ENCODE measurements at regions of chr19 and their contacts with region 1.

Region 1: GRCh38 chr19:40603389-40604135 is 2.4 kb downstream of the LTBP4 start:
- DNase-seq: peak; percentile 99
- ATAC-seq: peak; percentile 79
- H3K4me3 Mint-ChIP-seq: peak overlapping the region; percentile 73
- H3K27ac Mint-ChIP-seq: peak overlapping the region; percentile 82
- H3K4me1 Mint-ChIP-seq: peaks cover 61% of the 10 kb centered on the region
- H3K27me3 Mint-ChIP-seq: peaks cover 31% of the 10 kb centered on the region

Region 2: DNA sequence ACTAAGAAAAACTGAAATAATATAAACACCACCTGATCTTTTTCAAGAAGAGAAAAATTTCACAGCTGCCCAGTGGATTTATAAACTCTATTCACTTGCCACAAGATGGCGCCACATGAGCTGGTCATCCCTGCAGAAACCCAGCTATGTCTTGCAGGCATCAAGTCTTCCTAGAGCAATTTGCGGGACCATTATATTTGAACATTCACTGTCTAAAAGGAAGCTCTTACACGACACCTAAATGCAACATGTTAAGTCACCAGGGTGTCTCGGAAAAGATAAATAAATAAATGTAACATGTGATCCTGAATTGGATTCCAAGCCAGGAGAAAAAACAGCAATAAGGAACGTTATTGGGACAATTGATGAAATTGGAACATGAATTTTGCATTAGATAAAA is 298.2 kb before region 1 on chr19:
- CTCF ChIA-PET with region 1: interaction called, 38 read pairs
- DNase-seq: peak; percentile 87
- ATAC-seq: peak; percentile 76
- H3K4me3 Mint-ChIP-seq: no peak overlapping the region
- H3K27ac Mint-ChIP-seq: no peak overlapping the region
- H3K4me1 Mint-ChIP-seq: peaks cover 4% of the 10 kb centered on the region
- H3K27me3 Mint-ChIP-seq: no peaks in the 10 kb centered on the region

Region 3: GRCh38 chr19:40370997-40371801 is 232.4 kb before region 1 on chr19:
- CTCF ChIA-PET with region 1: no interaction called
- DNase-seq: no peak
- ATAC-seq: no peak
- H3K4me3 Mint-ChIP-seq: no peak overlapping the region
- H3K27ac Mint-ChIP-seq: no peak overlapping the region
- H3K4me1 Mint-ChIP-seq: peaks cover 12% of the 10 kb centered on the region
- H3K27me3 Mint-ChIP-seq: no peaks in the 10 kb centered on the region

Region 4: GRCh38 chr19:40403262-40403984 is 200.1 kb before region 1 on chr19:
- CTCF ChIA-PET with region 1: no interaction called
- DNase-seq: peak; percentile 93
- ATAC-seq: peak; percentile 81
- H3K4me3 Mint-ChIP-seq: peak overlapping the region; percentile 83
- H3K27ac Mint-ChIP-seq: peak overlapping the region; percentile 69
- H3K4me1 Mint-ChIP-seq: peaks cover 16% of the 10 kb centered on the region
- H3K27me3 Mint-ChIP-seq: peaks cover 4% of the 10 kb centered on the region

Region 5: DNA sequence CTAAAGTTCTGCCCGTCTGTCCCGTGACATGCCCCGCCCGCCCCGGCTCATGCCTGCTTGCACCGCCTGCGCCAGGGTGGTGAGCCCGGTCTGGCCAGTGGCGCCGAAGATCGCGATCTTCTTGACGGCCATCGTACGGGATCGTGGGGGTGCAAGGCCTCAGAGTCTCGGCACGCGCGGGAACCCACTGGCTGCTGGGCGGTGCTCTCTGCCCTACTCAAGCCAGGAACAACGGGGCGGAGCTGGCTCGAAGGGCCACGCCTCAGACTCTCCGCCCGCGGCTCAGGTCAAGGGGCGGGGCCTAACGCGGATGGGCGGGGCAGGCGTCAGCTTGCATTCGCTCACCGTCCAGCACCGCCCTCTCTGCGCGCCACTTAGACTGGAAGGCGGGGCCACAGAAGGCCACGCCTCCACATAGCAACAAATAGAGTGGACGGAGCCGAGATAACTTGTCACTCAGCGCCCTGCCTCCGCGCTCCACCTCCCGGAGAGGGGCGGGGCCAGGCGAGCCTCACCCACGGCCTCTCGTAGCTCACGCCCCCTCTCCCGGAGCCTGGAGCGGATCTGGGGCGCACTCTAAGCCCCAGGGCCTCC is 137.9 kb before region 1 on chr19 and contains the start of gene BLVRB:
- CTCF ChIA-PET with region 1: interaction called, 35 read pairs
- DNase-seq: peak; percentile 99
- ATAC-seq: peak; percentile 88
- H3K4me3 Mint-ChIP-seq: peak within 1 kb of the TSS; percentile 79
- H3K27ac Mint-ChIP-seq: peak within 1 kb of the TSS; percentile 85
- H3K4me1 Mint-ChIP-seq: peaks cover 34% of the 10 kb centered on the region
- H3K27me3 Mint-ChIP-seq: peaks cover 23% of the 10 kb centered on the region
- total RNA-seq, gene BLVRB: 12.9 to 23.3 TPM

Region 6: DNA sequence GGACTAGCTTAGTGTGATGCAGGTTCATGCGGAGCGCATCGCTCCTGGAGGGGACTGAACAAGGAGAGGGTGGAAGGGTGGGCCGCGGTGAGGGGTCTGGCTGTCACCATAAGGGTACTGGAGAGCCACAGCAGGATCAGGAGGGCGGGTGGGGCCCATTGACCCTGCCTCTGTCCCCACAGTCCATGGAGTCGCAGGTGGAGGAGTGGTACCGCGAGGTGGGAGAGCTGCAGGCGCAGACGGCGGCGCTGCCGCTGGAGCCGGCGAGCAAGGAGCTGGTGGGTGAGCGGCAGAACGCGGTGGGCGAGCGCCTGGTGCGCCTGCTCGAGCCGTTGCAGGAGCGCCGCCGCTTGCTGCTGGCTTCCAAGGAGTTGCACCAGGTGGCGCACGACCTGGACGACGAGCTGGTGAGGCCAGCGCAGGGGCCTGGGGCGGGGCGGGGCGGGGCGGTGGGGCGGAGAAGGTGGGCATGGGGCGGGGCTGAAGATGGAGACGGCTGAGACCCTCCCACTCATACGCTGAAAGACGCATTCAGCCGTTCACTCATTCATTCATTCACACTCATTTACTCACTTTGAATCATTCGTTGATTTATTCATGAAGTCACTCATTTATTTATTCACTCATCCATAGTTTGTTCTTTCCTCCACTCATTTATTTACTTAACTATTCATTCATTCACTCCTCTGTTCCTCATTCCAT is 54.4 kb before region 1 on chr19:
- CTCF ChIA-PET with region 1: interaction called, 29 read pairs
- DNase-seq: peak; percentile 78
- ATAC-seq: peak; percentile 93
- H3K4me3 Mint-ChIP-seq: no peak overlapping the region
- H3K27ac Mint-ChIP-seq: no peak overlapping the region
- H3K4me1 Mint-ChIP-seq: peaks cover 8% of the 10 kb centered on the region
- H3K27me3 Mint-ChIP-seq: peaks cover 52% of the 10 kb centered on the region

Region 7: DNA sequence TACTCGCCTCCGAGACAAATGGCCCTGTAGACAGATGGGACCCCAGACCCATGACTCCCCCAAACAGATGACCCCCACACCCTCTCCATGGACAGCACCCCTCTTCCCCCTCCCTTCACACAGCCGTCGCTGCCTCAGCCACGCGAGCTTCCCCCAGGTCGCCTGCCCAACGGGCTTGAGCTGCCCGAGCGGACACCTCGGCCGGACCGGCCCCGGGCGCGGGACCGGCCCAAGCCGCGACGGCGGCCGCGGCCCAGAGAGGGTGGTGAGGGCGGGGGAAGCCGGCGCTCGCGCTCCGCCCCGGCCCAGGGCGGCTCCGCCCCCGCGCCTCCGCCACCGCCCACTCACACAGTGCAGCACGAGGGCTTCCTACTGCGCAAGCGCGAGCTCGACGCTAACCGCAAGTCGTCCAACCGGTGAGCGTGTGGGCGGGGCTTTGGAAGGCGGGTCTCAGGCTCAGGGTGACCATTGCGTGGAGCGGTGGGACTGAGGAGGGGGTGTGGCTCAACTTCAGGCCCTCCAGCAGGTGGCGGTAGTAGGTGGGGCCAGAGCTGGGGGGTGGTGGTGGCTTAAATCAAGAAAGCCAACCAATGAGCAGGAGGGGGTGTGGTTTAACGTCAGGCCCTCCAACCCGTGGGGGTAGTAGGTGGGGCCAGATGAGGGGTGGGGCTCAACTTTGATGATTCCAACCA is 33.1 kb before region 1 on chr19:
- CTCF ChIA-PET with region 1: interaction called, 40 read pairs
- DNase-seq: peak; percentile 99
- ATAC-seq: peak; percentile 93
- H3K4me3 Mint-ChIP-seq: peak overlapping the region; percentile 56
- H3K27ac Mint-ChIP-seq: peak overlapping the region; percentile 81
- H3K4me1 Mint-ChIP-seq: peaks cover 16% of the 10 kb centered on the region
- H3K27me3 Mint-ChIP-seq: peaks cover 33% of the 10 kb centered on the region

Region 8: DNA sequence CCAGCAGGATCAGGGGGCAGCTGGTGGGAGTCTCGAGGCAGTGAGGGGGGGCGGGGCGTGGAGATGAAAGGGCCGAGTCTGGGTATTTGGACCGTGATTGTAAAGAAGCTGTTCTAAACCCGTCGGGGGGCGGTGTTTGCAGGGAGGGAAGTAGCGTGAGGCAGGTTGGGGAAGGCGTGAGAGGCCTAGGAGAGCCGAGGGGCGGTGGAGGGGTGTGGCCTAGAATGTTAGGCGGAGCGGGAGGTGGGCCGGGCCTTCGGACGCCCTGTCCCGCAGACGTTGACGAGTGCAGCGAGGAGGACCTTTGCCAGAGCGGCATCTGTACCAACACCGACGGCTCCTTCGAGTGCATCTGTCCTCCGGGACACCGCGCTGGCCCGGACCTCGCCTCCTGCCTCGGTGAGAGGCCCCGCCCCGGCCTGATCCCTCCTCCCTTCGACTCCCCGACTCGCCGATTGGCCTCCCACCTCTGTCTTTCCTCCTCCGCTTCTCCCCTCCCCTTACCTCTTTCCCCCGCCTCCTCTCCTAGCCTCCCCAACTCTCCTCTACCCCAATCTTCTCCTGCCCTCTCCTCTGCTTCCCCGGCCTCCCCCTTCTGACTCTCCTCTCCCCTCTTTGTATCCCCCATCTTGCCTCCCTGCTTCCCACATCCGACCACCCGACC is 10.2 kb after region 1 on chr19:
- CTCF ChIA-PET with region 1: interaction called, 65 read pairs
- DNase-seq: peak; percentile 93
- ATAC-seq: peak; percentile 70
- H3K4me3 Mint-ChIP-seq: peak overlapping the region; percentile 91
- H3K27ac Mint-ChIP-seq: peak overlapping the region; percentile 96
- H3K4me1 Mint-ChIP-seq: peaks cover 44% of the 10 kb centered on the region
- H3K27me3 Mint-ChIP-seq: no peaks in the 10 kb centered on the region

Region 9: GRCh38 chr19:40691421-40692211 is 88.1 kb after region 1 on chr19:
- CTCF ChIA-PET with region 1: no interaction called
- DNase-seq: no peak
- ATAC-seq: no peak
- H3K4me3 Mint-ChIP-seq: no peak overlapping the region
- H3K27ac Mint-ChIP-seq: no peak overlapping the region
- H3K4me1 Mint-ChIP-seq: peaks cover 2% of the 10 kb centered on the region
- H3K27me3 Mint-ChIP-seq: no peaks in the 10 kb centered on the region